GM18951 (cell line): ENCODE measurements at regions of chr6 and their contacts with region 1.

Region 1: GRCh38 chr6:135535989-135536414 is 38.5 kb upstream of the AHI1 start:
- POLR2A ChIP-seq: no peak

Region 2: DNA sequence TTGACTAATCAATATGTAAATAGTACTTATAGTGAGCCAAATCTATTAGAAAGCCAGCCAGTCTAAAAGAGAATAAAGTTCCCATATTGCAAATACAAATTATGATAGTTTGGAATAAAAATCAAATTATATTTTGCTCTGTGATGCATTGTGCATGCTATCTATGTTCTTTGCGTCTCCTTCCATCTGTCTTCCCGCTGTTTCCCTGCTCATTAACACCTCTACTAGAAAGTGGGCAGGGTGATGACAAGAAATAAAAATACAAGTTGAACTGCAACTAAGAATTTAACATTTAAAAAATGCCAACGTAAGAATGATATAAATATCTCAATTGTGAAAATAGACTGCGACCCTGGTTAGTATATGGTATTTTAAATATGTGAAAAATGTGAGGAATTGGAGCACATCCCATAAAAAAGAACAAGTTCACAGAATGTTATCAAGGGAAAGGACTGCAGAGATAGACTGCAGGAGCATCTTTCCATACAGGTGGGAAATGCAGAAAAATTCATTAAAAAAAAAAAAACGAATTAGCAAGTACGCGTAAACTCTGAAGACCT is 157.9 kb after region 1 on chr6:
- in situ Hi-C with region 1: no loop called
- POLR2A ChIP-seq: no peak

Region 3: DNA sequence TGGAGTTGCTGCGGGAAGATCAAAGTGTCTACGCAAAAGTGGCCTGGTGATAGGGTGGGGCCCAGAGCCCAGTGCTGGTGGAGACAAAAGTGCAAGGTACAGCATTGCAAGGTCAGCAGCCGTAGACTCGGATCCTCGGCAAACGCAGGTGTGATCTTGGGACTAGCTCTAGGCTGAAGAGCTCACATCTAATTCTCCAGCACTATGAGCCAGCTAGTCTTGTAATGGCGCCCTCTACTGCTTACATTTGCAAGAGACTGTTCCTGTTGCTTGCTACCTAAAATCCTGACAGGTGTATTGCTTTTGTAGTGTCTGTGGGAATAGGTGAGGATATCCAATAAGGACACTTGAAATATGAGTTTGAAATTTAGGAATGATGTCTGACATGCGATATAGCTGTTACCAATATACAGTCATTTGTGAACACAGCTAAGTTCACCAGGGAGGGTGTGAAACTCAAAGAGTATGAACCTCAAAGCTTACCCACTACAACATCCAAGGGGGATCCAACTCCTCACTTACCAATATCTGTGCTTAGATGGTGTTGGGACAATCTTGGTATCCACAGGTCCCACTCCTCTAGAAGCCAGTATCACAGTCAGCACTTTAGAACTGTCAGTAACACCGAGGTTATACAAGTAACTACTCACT is 373.9 kb after region 1 on chr6:
- in situ Hi-C with region 1: loop called (anchors 25 kb)
- POLR2A ChIP-seq: no peak

Region 4: GRCh38 chr6:136249811-136250685 is 714.0 kb after region 1 on chr6 and contains the start of gene MTFR2:
- in situ Hi-C with region 1: loop called (anchors 25 kb)
- POLR2A ChIP-seq: peak; percentile 83